SK-N-SH (cell line): ENCODE measurements at regions of chr17 and their contacts with region 1.

Region 1: DNA sequence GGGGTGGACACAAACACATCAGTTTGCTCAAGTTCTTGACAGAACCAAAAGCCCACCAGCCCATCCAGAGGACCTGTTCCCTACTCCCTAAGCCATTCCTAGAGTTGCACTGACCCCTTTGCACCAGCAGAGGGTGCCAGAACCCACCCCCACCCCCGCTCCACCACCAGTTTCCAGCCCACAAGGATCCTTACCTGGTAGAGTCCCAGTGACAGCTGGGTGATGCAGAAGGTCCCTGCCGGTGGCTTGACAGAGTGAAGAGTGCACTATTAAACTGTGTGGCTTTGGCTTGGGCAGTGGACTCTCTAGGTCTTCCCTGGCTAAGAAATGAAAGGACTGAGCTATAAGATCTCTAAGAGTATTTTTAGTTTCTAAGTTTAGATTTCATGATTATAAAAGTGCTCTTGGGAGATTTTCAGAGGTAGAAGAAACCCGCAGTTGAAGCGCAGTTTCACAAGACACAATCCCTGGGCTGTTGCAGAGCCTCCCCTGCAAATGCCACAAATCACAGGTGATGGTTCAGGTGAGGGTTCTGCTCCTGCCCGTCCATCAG is 73.3 kb upstream of the MTMR4 start:
- DNase-seq: peak; percentile 88
- H3K4me3 ChIP-seq: no peak overlapping the region
- H3K27ac ChIP-seq: no peak overlapping the region
- H3K4me1 ChIP-seq: no peaks in the 10 kb centered on the region; a peak in 1 of 4 replicates
- H3K27me3 ChIP-seq: no peaks in the 10 kb centered on the region
- CTCF ChIP-seq: peak; percentile 99
- EP300 ChIP-seq: no peak
- RAD21 ChIP-seq: peak; percentile 91

Region 2: DNA sequence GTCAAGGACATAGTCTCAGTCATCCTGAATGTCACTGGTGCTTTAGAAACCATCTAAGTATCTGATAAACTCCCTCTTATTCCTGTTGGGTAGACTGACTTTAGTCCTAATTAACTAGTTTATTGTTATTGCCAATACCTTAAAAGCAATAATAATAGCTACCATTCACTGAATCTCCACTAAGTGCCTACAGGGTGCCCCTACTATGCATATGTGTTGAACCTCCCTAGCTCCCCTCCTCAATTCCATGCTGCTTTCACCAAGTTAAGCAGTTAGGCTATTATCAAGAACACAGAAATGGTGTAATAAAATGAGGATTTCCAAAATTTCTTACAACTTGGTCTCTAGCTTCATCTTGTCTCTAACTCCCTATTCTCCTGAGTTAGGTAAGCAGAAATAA is 14.2 kb after region 1 on chr17:
- CTCF ChIA-PET with region 1: interaction called, 14 read pairs
- POLR2A ChIA-PET with region 1: no interaction called
- DNase-seq: no peak
- H3K4me3 ChIP-seq: no peak overlapping the region
- H3K27ac ChIP-seq: no peak overlapping the region
- H3K4me1 ChIP-seq: no peaks in the 10 kb centered on the region
- H3K27me3 ChIP-seq: no peaks in the 10 kb centered on the region
- CTCF ChIP-seq: no peak
- EP300 ChIP-seq: no peak
- RAD21 ChIP-seq: no peak

Region 3: GRCh38 chr17:58692239-58693055 is 104.7 kb after region 1 on chr17 and contains the start of gene RAD51C:
- CTCF ChIA-PET with region 1: interaction called, 11 read pairs
- POLR2A ChIA-PET with region 1: no interaction called
- DNase-seq: peak; percentile 95
- H3K4me3 ChIP-seq: peak within 1 kb of the TSS; percentile 68 to 71
- H3K27ac ChIP-seq: peak within 1 kb of the TSS; percentile 41 to 85
- H3K4me1 ChIP-seq: peaks cover 10 to 12% of the 10 kb centered on the region in 2 experiments; a peak in 3 of 4 replicates
- H3K27me3 ChIP-seq: no peaks in the 10 kb centered on the region
- CTCF ChIP-seq: no peak
- EP300 ChIP-seq: no peak
- RAD21 ChIP-seq: no peak
- polyA plus RNA-seq, gene RAD51C: 36.1 and 38.7 TPM in 2 replicates

Region 4: DNA sequence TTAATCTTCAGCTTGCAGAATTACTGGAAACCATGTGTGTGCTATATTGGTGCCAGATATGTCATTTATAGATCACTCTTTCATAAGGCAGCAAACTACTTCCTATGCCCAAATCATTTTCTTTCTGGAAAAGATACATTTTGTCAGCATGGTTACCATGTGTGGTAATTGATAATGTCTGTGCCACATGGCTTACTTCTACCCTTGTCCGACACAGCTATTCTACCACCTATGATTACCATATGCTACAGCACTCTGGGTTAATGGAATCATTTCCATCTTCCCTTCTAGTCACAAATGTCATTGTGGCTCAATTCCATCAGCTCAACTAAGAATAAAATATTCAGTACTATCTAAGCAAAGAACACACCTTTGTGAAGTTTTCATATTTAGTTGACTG is 159.9 kb after region 1 on chr17:
- CTCF ChIA-PET with region 1: no interaction called
- POLR2A ChIA-PET with region 1: no interaction called
- DNase-seq: peak; percentile 67
- H3K4me3 ChIP-seq: no peak overlapping the region
- H3K27ac ChIP-seq: no peak overlapping the region
- H3K4me1 ChIP-seq: no peaks in the 10 kb centered on the region; a peak in 1 of 4 replicates
- H3K27me3 ChIP-seq: no peaks in the 10 kb centered on the region
- CTCF ChIP-seq: no peak
- EP300 ChIP-seq: peak in 1 of 2 experiments; percentile 32; a peak in 1 of 4 replicates
- RAD21 ChIP-seq: no peak; the same call in 1 of the 2 replicates